Mammary epithelial cell (primary cell): ENCODE measurements at regions of chr4 and their contacts with region 1.

Region 1: DNA sequence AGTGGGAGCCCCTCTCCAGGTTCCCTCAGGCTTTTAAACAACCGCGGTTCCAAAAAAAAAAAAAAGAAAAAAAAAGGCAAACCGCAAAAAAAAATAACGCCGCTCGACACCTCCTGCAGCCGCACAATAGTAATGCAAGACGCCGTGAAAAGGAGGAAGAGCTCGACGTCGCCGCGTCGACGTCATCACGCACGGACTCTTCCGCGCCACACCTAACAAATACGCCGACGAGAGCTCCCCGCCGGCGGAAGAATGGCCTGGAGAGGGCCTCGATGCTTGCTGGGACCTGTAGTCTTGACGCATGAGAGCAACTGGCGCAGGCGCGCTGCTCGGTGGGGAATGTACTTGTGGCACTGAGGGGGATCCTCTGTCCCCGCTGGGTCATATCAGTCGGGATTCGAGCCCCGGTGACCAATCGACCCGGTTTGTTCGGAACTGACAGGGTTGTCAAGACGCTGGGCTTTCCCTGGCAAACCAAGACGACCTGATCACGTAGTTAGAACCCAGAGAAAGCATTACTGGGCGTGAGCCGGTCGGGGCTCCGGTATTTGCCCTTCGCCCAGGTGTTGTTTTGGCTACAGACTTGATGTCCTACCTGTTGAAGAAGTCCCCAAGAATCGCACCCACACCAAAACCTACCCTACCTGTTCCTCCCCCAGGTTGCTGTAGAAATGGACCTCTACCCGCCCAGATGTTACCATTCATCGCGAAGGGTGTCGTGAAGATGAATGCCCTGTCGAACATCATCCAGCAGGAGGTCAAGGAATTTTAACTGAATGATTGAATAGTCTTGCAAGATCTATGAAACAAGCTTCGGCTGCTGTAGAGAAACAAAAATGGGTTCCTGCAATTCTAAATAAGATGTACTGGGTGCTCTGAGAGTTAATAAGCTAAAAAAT is at the start of gene CBR4:
- DNase-seq: peak; percentile 98
- H3K4me3 ChIP-seq: peak within 1 kb of the TSS; percentile 67 to 79 (median 78)
- H3K27ac ChIP-seq: peak within 1 kb of the TSS; percentile 93
- H3K4me1 ChIP-seq: peaks cover 28% of the 10 kb centered on the region
- H3K27me3 ChIP-seq: no peaks in the 10 kb centered on the region
- CTCF ChIP-seq: peak; percentile 15 to 43
- total RNA-seq, gene CBR4: 19.0 to 24.4 TPM

Region 2: GRCh38 chr4:168514249-168514852 is 496.0 kb before region 1 on chr4:
- CTCF ChIA-PET with region 1: interaction called, 10 read pairs
- dilution Hi-C with region 1: no loop called
- in situ Hi-C with region 1: no loop called
- intact Hi-C with region 1: loop called (anchors 10 kb)
- DNase-seq: peak; percentile 24
- H3K4me3 ChIP-seq: no peak overlapping the region
- H3K27ac ChIP-seq: no peak overlapping the region
- H3K4me1 ChIP-seq: no peaks in the 10 kb centered on the region
- H3K27me3 ChIP-seq: no peaks in the 10 kb centered on the region
- CTCF ChIP-seq: peak; percentile 31 to 36

Region 3: GRCh38 chr4:168923526-168924194 is 86.7 kb before region 1 on chr4:
- CTCF ChIA-PET with region 1: interaction called, 4 read pairs
- dilution Hi-C with region 1: no loop called
- in situ Hi-C with region 1: loop called in 1 of 2 experiments (anchors 10 kb)
- intact Hi-C with region 1: loop called (anchors 1 kb)
- DNase-seq: peak; percentile 42
- H3K4me3 ChIP-seq: no peak overlapping the region
- H3K27ac ChIP-seq: no peak overlapping the region
- H3K4me1 ChIP-seq: no peaks in the 10 kb centered on the region
- H3K27me3 ChIP-seq: no peaks in the 10 kb centered on the region
- CTCF ChIP-seq: peak; percentile 58 to 71

Region 4: DNA sequence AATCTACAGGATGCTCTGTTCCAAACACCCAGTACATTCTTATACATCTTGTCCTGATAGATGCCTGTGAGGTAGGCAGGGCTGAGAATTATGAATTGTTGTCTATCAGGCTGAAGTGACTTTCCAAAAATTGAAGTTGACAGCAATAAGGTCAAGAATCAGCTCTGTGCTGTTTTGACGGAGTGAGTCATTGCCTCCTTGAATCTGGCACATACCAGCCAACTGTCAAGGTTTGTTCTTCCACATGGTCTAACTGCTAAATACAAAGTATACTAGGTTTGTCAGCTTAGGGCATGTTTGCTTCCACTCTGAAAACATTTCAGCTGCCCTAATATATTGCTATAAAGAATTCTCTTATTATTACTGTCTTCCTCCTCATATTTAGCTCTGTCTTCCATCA is 228.1 kb after region 1 on chr4:
- CTCF ChIA-PET with region 1: interaction called, 10 read pairs
- dilution Hi-C with region 1: no loop called
- in situ Hi-C with region 1: no loop called
- intact Hi-C with region 1: no loop called
- DNase-seq: peak; percentile 51
- H3K4me3 ChIP-seq: no peak overlapping the region
- H3K27ac ChIP-seq: no peak overlapping the region
- H3K4me1 ChIP-seq: peaks cover 49% of the 10 kb centered on the region
- H3K27me3 ChIP-seq: no peaks in the 10 kb centered on the region
- CTCF ChIP-seq: no peak

Region 5: GRCh38 chr4:169485791-169486742 is 475.7 kb after region 1 on chr4:
- CTCF ChIA-PET with region 1: interaction called, 8 read pairs
- dilution Hi-C with region 1: no loop called
- in situ Hi-C with region 1: loop called (anchors 5 kb)
- intact Hi-C with region 1: no loop called
- DNase-seq: peak; percentile 50
- H3K4me3 ChIP-seq: no peak overlapping the region
- H3K27ac ChIP-seq: peak overlapping the region; percentile 15
- H3K4me1 ChIP-seq: peaks cover 4% of the 10 kb centered on the region
- H3K27me3 ChIP-seq: no peaks in the 10 kb centered on the region
- CTCF ChIP-seq: peak; percentile 43 to 54